ENCODE measurements at regions of chr20 and their contacts with region 1.

Region 1: DNA sequence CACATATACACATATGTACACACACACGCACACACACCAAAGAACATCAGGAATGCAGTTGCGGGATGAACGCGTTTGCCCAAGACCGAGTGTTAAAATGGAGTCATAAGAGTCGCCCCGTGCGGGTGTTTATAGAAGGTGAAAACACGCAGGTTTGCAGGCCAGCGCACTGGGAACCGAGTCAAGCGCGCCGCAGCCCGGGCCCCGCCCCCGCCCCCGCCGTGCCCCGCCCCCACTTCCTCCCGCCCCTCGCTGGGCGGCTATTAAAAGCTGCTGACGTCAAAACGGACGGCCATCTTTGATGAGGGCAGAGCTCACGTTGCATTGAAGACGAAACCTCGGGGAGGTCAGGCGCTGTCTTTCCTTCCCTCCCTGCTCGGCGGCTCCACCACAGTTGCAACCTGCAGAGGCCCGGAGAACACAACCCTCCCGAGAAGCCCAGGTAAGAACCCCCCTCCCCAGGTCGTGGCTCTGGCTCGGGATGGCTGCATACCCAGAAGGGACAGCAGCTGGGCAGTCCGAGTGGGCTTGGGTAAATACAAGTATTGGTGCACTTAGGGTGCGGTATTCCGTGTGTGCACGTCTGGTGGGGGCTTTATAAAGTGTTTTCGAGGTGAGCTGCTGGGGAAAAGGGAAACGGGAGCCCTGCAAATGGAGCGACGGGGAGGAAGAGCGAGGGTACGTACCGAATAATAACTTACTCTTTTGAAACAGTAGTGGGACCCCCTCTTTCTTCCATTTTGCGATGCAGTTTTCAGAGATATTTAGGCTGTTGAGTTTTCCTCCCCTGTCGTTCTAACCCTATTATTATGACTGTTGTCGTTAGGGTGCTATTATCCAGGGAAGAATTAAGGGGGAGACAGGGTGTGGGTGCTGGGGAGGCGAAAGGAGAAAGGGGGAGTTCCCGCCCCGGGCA is at the start of gene SNAP25:
- DNase-seq: peak; percentile 66

Region 2: DNA sequence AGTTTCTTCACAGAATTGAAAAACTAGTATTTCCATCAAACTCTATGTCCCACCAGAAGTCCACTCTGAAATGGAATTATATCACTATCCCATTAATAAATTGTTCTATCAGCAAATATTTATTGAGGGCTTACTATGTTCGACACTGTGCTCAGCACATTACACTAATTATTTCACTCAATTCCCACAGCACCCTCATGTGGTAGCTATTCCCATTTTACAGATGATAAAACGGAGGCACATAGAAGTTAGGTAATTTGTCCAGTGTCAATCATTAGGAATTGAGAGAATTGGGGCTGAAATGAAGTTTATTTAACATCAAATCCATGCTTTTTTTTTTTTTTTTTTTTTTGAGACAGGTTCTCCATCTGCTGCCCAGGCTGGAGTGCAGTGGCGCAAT is 162.7 kb after region 1 on chr20:
- CTCF ChIA-PET with region 1: no interaction called
- POLR2A ChIA-PET with region 1: no interaction called
- DNase-seq: no peak

Region 3: DNA sequence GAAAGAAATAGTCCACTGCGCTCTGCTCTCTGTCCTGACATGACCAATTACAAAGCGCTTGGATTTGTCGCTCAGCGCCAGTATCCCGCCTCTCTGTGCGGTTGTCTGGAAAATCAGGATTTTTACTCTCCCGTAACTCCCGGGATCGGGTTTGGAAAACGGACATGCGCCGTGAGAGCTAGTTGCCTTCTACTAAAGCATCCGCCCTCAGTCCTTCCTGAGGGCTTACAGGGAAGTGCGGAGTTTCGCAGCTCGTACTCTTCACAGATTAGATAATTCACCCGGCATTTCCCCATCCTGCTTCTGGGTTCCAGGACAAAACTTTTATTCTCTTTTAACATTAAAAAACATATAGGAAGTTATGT is 215.7 kb after region 1 on chr20:
- CTCF ChIA-PET with region 1: no interaction called
- POLR2A ChIA-PET with region 1: interaction called, 11 read pairs
- DNase-seq: peak; percentile 80